Activated T-helper 1 cell treated with anti-CD3 and anti-CD28 coated beads, Interleukin-12 subunit alpha, Interleukin-12 subunit beta, Interleukin-2, Interleukin-4 antibody, amounts not matched to agents 30 ng/mL and 10 ng/mL and 1 ng/mL, durations not matched to agents 14 hours and 24 hours and 36 hours (primary cell): ENCODE measurements at regions of chr9 and their contacts with region 1.

Region 1: DNA sequence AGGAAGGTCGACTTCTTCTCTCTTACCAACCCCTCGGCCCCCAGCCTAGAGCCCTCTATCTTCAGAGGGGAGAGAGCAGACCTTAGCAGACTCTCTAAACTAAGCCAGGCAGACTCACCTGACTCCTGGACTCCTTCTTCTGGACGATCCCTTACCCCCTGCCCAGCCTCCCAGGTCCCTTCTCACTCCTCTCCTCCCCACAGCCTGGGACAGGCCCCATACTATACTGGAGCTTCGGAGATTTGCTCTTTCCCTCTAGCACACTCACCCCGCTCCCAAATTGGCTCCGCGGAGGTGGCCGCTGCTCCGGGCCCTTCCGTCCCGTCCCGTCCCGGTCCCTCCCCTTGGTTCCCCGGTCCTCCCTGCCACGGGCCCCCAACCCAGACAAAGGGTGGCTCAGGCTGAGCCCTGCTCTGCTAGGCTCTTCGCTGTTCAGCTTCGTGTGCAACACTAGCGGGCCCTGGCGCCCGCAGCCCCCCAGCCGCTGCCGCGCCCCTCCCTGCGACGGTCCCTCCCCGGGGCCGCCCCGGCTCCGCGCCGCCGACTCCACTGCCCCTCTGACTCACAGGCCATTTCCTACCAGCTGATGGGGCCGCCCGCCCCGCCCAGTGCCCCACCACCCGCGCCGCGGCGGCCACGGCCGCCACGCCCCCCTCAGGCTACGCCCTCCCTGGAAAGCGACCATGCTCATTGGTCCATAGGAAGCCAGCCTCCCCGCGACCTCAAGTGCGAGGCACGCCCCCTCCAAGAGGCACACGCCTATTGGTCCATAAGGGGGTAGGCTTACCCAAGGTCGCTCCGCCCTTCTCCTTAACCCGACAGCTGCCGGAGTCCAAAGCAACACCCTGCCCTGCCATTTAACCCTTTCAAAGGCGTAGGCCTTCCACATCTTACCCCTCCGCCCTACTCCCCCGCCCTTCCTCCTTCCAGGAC is 4.4 kb downstream of the ATOSB start:
- DNase-seq: peak; percentile 94
- H3K4me3 Mint-ChIP-seq: peak overlapping the region; percentile 77
- H3K27ac Mint-ChIP-seq: peak overlapping the region; percentile 90
- H3K4me1 Mint-ChIP-seq: peaks cover 61% of the 10 kb centered on the region
- H3K27me3 Mint-ChIP-seq: no peaks in the 10 kb centered on the region

Region 2: DNA sequence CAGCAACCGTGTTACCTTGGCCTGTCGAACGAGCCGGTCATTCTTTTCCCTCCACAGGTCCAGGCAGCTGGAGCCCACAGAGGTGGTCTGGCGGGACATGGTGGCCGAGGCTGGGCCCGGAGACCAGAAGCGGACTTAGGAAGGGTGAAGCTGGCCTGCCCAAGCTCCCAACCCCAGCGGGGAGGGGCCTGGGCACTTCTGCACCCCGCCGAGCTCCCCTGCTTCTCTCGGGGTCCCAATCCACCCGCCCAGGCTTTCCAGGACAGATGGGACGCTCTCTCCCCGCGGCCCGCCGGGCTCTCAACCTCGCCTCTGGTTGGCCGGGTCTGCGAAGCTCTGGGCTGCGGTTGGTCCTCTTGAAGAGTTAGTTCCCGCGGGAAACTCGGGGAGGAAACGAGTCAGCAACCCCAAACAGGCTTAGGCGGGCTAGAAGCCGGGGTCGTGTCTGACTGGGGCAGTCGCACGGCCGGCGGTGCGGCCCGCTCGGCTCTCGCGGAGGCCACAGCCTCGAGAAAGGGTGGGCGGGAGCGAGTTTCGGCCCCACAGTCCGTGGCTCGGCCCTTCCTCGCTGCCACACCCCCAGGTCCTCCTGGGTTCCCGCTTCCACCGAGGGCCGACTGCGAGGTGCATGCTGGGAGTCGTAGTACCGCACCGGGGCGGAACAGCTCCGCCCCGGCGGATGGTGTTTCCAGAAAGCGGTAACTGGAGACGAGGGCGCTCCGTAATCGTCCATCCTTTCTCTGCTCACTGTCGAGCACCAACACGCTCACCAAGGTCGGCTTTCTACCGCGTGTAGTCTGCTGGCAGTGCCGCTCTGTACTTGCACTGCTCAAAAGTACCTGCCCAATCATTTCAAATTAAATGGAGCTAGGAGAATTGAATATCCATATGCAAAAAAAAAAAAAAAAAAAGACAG is 31.6 kb before region 1 on chr9 and contains the start of gene FANCG:
- intact Hi-C with region 1: loop called (anchors 1 kb)
- DNase-seq: peak; percentile 86
- H3K4me3 Mint-ChIP-seq: peak within 1 kb of the TSS; percentile 96
- H3K27ac Mint-ChIP-seq: peak within 1 kb of the TSS; percentile 98
- H3K4me1 Mint-ChIP-seq: peaks cover 32% of the 10 kb centered on the region
- H3K27me3 Mint-ChIP-seq: no peaks in the 10 kb centered on the region
- total RNA-seq, gene FANCG: 102 and 104 TPM in 2 replicates

Region 3: GRCh38 chr9:35193762-35194161 is 82.5 kb after region 1 on chr9:
- intact Hi-C with region 1: no loop called
- DNase-seq: no peak
- H3K4me3 Mint-ChIP-seq: no peak overlapping the region
- H3K27ac Mint-ChIP-seq: no peak overlapping the region
- H3K4me1 Mint-ChIP-seq: no peaks in the 10 kb centered on the region
- H3K27me3 Mint-ChIP-seq: no peaks in the 10 kb centered on the region

Region 4: DNA sequence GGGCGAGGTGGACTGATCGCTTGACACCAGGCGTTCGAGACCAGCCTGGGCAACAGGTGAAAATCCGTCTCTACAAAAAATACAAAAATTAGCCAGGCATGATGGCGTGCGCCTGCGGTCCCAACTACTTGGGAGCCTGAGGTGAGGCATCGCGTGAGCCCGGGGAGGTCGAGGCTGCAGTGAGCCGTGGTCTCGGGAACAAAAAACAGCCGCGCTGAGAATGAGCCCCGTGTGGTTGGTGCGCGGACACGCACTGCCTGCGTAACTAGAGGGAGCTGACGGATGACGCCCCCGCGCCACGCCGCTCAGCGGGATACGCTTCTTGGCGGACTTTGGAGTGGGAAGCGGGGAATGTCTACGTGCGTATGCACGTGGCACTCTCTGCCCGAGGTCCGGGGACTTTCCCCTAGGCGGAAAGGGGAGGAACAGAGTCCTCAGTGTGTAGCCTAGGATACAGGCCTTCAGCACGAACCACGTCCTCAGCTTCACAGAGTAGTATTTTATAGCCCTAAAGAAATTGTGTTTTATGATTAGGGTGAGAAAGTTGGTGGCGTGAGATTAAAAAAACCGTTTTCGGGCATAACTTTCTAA is 546.4 kb after region 1 on chr9 and contains the start of gene RMRP:
- intact Hi-C with region 1: loop called (anchors 1 kb)
- DNase-seq: peak; percentile 88
- H3K4me3 Mint-ChIP-seq: peak within 1 kb of the TSS; percentile 84
- H3K27ac Mint-ChIP-seq: peak within 1 kb of the TSS; percentile 99
- H3K4me1 Mint-ChIP-seq: peaks cover 59% of the 10 kb centered on the region
- H3K27me3 Mint-ChIP-seq: peaks cover 2% of the 10 kb centered on the region
- total RNA-seq, gene RMRP: 5,317 and 5,787 TPM in 2 replicates

Region 5: DNA sequence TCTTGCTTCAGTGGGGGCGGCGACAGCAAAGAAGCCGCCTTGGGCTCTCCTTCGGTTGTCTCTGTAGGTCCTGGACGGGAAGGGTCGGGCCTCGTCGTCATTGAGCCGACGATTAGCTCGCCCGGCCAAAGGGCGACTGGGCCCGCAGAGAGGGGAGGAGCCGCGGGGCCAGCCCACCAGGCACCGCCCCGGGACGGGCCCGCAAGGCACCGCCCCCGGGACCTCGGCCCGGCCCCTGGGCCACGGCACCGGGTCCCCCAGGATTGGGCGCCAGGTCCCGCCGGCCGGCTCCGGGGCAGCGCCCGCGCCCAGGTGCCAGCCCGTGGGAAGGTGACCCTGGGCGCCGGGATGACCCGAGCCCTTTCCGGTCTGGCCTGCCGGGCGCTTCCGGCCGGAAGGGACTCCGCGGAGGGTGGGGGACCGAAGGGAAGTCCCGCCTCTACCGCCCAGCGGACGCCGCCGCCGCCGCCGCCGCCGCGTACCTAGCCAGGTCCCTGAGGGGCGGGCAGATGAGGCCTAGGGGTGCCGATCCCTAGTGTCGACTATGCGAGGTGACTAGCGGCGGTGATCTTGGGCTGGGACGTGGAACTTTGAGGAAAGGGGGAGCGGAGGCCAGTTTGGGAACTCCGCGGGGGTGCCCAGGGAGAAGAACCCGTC is 637.7 kb after region 1 on chr9 and contains the starts of genes GBA2 and RGP1:
- intact Hi-C with region 1: loop called (anchors 5 kb)
- DNase-seq: peak; percentile 69
- H3K4me3 Mint-ChIP-seq: peak within 1 kb of the TSS; percentile 95
- H3K27ac Mint-ChIP-seq: peak within 1 kb of the TSS; percentile 73
- H3K4me1 Mint-ChIP-seq: peaks cover 40% of the 10 kb centered on the region
- H3K27me3 Mint-ChIP-seq: no peaks in the 10 kb centered on the region
- total RNA-seq, gene GBA2: 54.7 and 58.4 TPM in 2 replicates
- total RNA-seq, gene RGP1: 18.4 and 18.9 TPM in 2 replicates